ENCODE measurements at regions of chr1 and their contacts with region 1.

Region 1: DNA sequence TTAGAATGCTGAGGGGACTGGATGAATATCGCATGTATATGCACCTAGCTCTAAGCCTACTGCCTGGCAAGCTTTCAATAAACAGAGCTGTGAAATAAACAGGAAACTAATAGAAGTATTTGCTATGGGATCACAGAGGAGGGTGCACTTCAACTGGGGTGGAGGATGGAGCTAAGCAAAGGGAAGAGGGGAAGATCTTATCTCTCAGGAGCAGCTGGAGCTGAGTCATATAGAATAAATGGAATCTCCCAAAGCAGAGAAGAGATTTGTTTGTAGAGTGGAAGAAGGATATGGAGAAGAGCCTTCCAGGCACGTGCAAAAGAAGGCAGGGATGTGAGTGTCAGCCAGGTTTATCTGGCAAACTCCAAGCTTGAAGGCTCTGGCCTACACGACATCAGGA is 17.0 kb upstream of the KCNA10 start:
- DNase-seq: no peak
- ATAC-seq: no peak
- H3K4me3 ChIP-seq: no peak overlapping the region
- H3K27ac ChIP-seq: no peak overlapping the region
- H3K4me1 ChIP-seq: no peaks in the 10 kb centered on the region
- CTCF ChIP-seq: no peak
- EP300 ChIP-seq: no peak
- POLR2A ChIP-seq: no peak
- RAD21 ChIP-seq: no peak

Region 2: GRCh38 chr1:110513511-110513910 is 22.5 kb before region 1 on chr1:
- CTCF ChIA-PET with region 1: no interaction called
- POLR2A ChIA-PET with region 1: no interaction called
- DNase-seq: no peak
- ATAC-seq: peak; percentile 49 to 54; a peak in 4 of 6 replicates
- H3K4me3 ChIP-seq: no peak overlapping the region
- H3K27ac ChIP-seq: no peak overlapping the region
- H3K4me1 ChIP-seq: no peaks in the 10 kb centered on the region
- CTCF ChIP-seq: no peak
- EP300 ChIP-seq: no peak
- POLR2A ChIP-seq: no peak
- RAD21 ChIP-seq: no peak

Region 3: GRCh38 chr1:110524311-110525251 is 11.4 kb before region 1 on chr1:
- CTCF ChIA-PET with region 1: interaction called, 22 read pairs
- POLR2A ChIA-PET with region 1: no interaction called
- DNase-seq: peak; percentile 29 to 49
- ATAC-seq: peak in 1 of 2 experiments; percentile 89; a peak in 3 of 6 replicates
- H3K4me3 ChIP-seq: no peak overlapping the region
- H3K27ac ChIP-seq: no peak overlapping the region
- H3K4me1 ChIP-seq: peaks cover 16% of the 10 kb centered on the region
- CTCF ChIP-seq: peak; percentile 58
- EP300 ChIP-seq: no peak
- POLR2A ChIP-seq: no peak
- RAD21 ChIP-seq: peak; percentile 65 to 74